Activated CD4-positive, alpha-beta T cell treated with anti-CD3 and anti-CD28 coated beads for 36 hours (primary cell): ENCODE measurements at regions of chr10 and their contacts with region 1.

Region 1: GRCh38 chr10:114703377-114704107 is 45.5 kb upstream of the ABLIM1 start:
- DNase-seq: peak; percentile 28
- ATAC-seq: peak; percentile 30
- H3K4me3 Mint-ChIP-seq: no peak overlapping the region
- H3K27ac Mint-ChIP-seq: no peak overlapping the region
- H3K4me1 Mint-ChIP-seq: no peaks in the 10 kb centered on the region
- H3K27me3 Mint-ChIP-seq: peaks cover 3% of the 10 kb centered on the region

Region 2: GRCh38 chr10:114367041-114367818 is 336.3 kb before region 1 on chr10:
- CTCF ChIA-PET with region 1: no interaction called
- POLR2A ChIA-PET with region 1: no interaction called
- intact Hi-C with region 1: loop called in 1 of 2 experiments (anchors 10 kb)
- DNase-seq: no peak
- ATAC-seq: no peak
- H3K4me3 Mint-ChIP-seq: no peak overlapping the region
- H3K27ac Mint-ChIP-seq: no peak overlapping the region
- H3K4me1 Mint-ChIP-seq: no peaks in the 10 kb centered on the region
- H3K27me3 Mint-ChIP-seq: no peaks in the 10 kb centered on the region